Common myeloid progenitor, CD34-positive (primary cell): ENCODE measurements at regions of chr11 and their contacts with region 1.

Region 1: GRCh38 chr11:10307442-10308207 is 2.8 kb downstream of the ADM start:
- DNase-seq: peak; percentile 90 to 96 (median 96)
- H3K4me3 ChIP-seq: peak overlapping the region; percentile 15 to 95 (median 86)
- H3K27ac ChIP-seq: peak overlapping the region in 1 of 2 experiments; percentile 61
- H3K4me1 ChIP-seq: peaks cover 11 to 57% (median 53%) of the 10 kb centered on the region in 4 experiments
- H3K27me3 ChIP-seq: peaks cover 0 to 33% (median 18%) of the 10 kb centered on the region in 5 experiments

Region 2: DNA sequence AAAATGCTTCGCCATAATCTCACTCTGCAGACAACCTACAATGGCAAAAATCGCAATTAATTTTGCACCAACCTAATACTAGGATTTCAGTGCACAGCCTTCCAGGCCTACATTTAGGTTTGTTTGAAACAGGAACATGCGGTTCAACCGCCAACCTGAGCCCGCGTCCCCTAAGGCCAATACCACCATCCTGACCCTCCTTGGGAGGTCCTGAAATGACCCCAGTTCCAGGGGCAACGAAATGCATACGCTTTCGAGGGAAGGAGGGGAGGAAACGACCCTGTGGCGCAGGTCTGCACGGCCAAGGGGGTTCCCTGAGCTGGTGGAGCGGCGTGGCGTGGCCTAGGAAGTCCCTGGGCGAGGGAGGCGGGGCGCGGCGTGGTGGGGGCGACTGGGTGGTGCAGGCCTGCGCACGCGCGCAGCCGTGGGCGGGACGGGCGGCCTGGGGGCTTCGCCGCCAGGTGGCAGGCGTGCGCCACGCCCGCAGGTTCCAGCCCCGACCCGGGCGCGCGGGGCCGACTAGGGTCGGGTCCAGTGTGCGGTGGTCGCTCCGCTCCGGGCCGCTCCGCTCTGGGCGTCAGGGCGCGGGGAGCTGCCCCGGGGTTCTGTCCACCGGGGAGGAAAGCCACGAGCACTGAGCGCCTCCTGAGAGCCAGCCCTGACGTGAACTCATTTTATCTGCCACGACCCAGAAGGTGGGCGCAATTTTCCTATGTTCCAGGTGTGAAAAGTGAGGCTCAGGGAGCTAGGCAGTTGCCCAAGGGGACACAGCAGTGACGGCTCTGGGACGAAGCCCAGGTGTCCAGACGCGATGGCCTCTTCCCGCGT is 549.6 kb before region 1 on chr11:
- CTCF ChIA-PET with region 1: interaction called, 13 read pairs
- POLR2A ChIA-PET with region 1: no interaction called
- DNase-seq: peak; percentile 87 to 95 (median 95)
- H3K4me3 ChIP-seq: peak overlapping the region; percentile 55 to 86 (median 75)
- H3K27ac ChIP-seq: peak overlapping the region; percentile 59 to 61
- H3K4me1 ChIP-seq: peaks cover 12 to 64% (median 48%) of the 10 kb centered on the region in 4 experiments
- H3K27me3 ChIP-seq: no peaks in the 10 kb centered on the region

Region 3: GRCh38 chr11:10181811-10182210 is 125.8 kb before region 1 on chr11:
- CTCF ChIA-PET with region 1: interaction called, 20 read pairs
- POLR2A ChIA-PET with region 1: no interaction called
- DNase-seq: peak; percentile 60 to 85 (median 78)
- H3K4me3 ChIP-seq: no peak overlapping the region
- H3K27ac ChIP-seq: peak overlapping the region in 1 of 2 experiments; percentile 75
- H3K4me1 ChIP-seq: peaks cover 0 to 5% (median 0%) of the 10 kb centered on the region in 4 experiments
- H3K27me3 ChIP-seq: no peaks in the 10 kb centered on the region

Region 4: DNA sequence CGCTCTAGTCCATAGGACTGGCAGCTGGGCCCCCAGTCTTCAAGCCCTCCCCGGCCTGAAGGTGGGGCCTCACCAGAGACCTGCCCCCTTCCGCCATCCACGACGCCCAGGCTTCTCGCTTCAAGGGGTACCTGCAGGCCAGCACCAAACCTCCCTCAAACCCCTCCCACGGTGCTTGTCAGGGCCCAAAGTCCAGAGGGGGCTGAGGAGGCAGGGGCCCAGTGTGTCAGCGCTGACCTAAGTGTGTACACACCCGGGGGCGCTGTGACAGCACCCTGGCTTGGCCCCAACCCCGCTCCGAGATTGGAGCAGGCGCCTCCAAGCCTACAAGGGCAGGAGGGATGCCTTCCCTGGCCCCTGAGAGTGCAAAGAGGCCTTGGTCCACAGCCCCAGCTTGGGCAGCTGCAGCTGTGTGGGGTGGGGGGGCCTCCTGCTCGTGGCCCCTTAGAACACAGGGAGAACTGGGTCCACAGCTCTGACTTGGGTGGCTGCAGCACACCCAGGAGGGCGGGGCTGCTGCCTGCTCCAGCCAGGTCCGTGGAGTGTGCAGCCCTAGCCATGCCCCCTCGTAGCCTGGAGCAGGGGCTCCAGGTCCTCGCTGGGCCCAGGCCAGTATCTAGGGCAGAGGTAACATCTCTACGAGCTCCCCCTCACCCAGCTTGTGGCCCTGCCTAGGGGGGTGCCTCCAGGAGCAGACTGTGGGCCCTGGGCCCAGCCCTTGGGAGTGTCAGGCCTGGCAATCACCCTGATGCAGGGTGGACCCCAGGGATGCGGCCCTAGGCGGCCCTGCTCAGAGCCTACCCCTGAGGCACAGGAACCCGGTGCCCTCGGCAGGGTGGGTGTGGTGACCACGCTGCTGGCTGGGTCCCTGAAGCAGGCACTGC is 18.5 kb before region 1 on chr11:
- CTCF ChIA-PET with region 1: interaction called, 12 read pairs
- POLR2A ChIA-PET with region 1: interaction called, 3 read pairs
- DNase-seq: no peak
- H3K4me3 ChIP-seq: no peak overlapping the region
- H3K27ac ChIP-seq: no peak overlapping the region
- H3K4me1 ChIP-seq: peaks cover 8 to 53% (median 23%) of the 10 kb centered on the region in 4 experiments
- H3K27me3 ChIP-seq: no peaks in the 10 kb centered on the region

Region 5: GRCh38 chr11:10348650-10349285 is 41.1 kb after region 1 on chr11:
- CTCF ChIA-PET with region 1: no interaction called
- POLR2A ChIA-PET with region 1: no interaction called
- DNase-seq: no peak
- H3K4me3 ChIP-seq: no peak overlapping the region
- H3K27ac ChIP-seq: no peak overlapping the region
- H3K4me1 ChIP-seq: no peaks in the 10 kb centered on the region
- H3K27me3 ChIP-seq: no peaks in the 10 kb centered on the region

Region 6: GRCh38 chr11:10366568-10367370 is 59.1 kb after region 1 on chr11:
- CTCF ChIA-PET with region 1: interaction called, 15 read pairs
- POLR2A ChIA-PET with region 1: interaction called, 3 read pairs
- DNase-seq: peak; percentile 92 to 99 (median 98)
- H3K4me3 ChIP-seq: peak overlapping the region in 2 of 7 experiments; percentile 37 to 54
- H3K27ac ChIP-seq: no peak overlapping the region
- H3K4me1 ChIP-seq: peaks cover 0 to 9% (median 4%) of the 10 kb centered on the region in 4 experiments
- H3K27me3 ChIP-seq: no peaks in the 10 kb centered on the region